ENCODE measurements at regions of chr2 and their contacts with region 1.

Region 1: GRCh38 chr2:206095536-206096332 is 9.8 kb upstream of the INO80D start:
- DNase-seq: no peak
- ATAC-seq: no peak
- H3K4me3 ChIP-seq: no peak overlapping the region
- H3K27ac ChIP-seq: no peak overlapping the region
- H3K4me1 ChIP-seq: no peaks in the 10 kb centered on the region
- H3K27me3 ChIP-seq: no peaks in the 10 kb centered on the region
- CTCF ChIP-seq: no peak

Region 2: DNA sequence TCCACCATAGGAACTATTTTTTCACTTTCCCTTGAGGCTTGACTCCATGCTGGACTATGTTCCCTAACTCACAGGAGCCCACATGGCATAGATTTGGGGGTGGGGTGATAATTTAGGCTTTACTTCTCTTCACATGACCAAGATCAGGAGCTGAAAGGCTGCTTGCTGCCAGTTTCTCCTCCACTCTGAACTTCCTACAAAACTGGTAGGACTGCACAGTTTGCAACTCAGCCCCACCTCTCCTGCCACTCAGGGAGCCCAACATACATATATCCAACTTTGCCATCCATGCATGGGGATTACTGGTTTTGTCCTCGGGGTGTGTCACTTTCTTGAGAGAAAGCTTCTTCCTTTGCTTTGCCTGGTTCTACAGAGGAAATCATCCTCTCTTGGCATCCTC is 23.9 kb before region 1 on chr2:
- intact Hi-C with region 1: loop called in 1 of 10 experiments (anchors 2 kb)
- DNase-seq: no peak
- ATAC-seq: no peak
- H3K4me3 ChIP-seq: no peak overlapping the region
- H3K27ac ChIP-seq: no peak overlapping the region
- H3K4me1 ChIP-seq: peaks cover 0 to 19% (median 0%) of the 10 kb centered on the region in 9 donors
- H3K27me3 ChIP-seq: no peaks in the 10 kb centered on the region
- CTCF ChIP-seq: no peak